Right cardiac atrium (tissue), 5 donors: ENCODE measurements at regions of chr15 and their contacts with region 1.

Region 1: DNA sequence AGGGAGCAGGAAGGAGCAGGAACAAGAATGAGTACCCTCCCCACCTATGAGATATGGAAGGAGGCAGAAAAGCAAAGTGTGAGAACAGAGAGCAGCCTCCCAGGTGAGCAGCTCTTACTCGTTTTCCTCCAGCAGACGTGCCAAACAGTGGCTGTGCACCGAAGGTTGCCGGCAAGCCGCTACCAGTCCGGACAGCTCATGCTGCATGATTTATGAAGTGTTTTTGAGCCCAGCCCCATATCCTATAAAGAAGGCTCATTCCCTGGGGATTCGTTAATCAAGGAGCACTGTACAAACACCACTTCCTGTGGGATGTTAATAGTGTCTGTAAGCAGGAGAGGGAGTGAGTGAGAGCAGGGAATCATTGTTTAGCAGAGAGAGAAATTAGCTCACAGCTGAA is 118.3 kb upstream of the FOXB1 start:
- DNase-seq: no peak
- ATAC-seq: no peak
- H3K4me3 ChIP-seq: no peak overlapping the region
- H3K27ac ChIP-seq: no peak overlapping the region
- H3K4me1 ChIP-seq: no peaks in the 10 kb centered on the region
- H3K27me3 ChIP-seq: no peaks in the 10 kb centered on the region

Region 2: GRCh38 chr15:59825913-59826312 is 59.9 kb before region 1 on chr15:
- intact Hi-C with region 1: loop called in 1 of 4 experiments (anchors 10 kb)
- DNase-seq: no peak
- ATAC-seq: no peak
- H3K4me3 ChIP-seq: no peak overlapping the region
- H3K27ac ChIP-seq: no peak overlapping the region
- H3K4me1 ChIP-seq: no peaks in the 10 kb centered on the region
- H3K27me3 ChIP-seq: no peaks in the 10 kb centered on the region

Region 3: DNA sequence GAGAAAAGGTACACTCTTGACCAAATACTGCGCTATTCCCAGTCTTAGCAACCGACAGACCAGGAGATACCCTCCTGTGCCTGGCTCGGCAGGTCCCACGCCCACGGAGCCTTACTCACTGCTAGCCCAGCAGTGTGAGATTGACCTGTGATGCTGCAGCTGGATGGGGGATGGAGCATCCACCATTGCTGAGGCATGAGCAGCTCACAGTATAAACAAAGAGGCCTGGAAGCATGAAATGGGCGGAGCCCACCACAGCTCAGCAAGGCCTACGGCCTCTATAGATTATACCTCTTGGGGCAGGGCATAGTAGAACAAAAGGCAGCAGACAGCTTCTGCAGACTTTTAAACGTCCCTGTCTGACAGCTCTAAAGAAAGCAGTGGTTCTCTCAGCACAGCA is 351.6 kb after region 1 on chr15:
- intact Hi-C with region 1: no loop called
- DNase-seq: no peak
- ATAC-seq: no peak
- H3K4me3 ChIP-seq: no peak overlapping the region
- H3K27ac ChIP-seq: no peak overlapping the region
- H3K4me1 ChIP-seq: no peaks in the 10 kb centered on the region
- H3K27me3 ChIP-seq: no peaks in the 10 kb centered on the region